ENCODE measurements at regions of chr4 and their contacts with region 1.

Region 1: DNA sequence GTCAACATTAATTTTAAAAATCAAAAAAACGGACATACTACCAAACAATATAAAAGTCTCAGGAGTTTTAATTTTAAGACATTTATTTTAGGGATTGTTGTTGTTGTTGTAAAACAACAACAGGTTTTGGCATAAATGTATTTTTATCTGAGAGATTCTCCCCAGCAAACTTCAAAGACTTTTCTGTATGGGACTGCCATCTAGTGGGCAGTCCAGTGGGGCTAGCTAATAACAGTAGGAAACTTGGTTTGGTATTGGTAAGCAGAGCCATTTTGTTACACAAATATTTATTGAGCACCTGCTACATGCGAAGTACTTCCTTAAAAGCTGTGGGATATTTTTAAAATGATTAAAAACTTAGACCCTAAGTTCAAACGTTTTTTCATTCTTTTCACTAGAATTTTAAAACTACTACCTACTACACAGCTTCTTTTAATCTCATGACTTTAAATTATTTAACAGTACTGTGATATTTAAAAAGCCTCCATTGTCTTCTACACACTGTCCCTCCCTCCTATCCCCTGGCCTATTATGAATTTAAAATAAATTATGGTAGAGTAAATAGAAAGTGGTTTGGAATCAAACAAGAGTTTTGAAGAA is 1028.4 kb upstream of the INTU start:
- DNase-seq: peak; percentile 23
- H3K4me3 Mint-ChIP-seq: no peak overlapping the region
- H3K27ac Mint-ChIP-seq: no peak overlapping the region
- H3K4me1 Mint-ChIP-seq: no peaks in the 10 kb centered on the region
- H3K27me3 Mint-ChIP-seq: no peaks in the 10 kb centered on the region
- CTCF ChIP-seq: no peak

Region 2: DNA sequence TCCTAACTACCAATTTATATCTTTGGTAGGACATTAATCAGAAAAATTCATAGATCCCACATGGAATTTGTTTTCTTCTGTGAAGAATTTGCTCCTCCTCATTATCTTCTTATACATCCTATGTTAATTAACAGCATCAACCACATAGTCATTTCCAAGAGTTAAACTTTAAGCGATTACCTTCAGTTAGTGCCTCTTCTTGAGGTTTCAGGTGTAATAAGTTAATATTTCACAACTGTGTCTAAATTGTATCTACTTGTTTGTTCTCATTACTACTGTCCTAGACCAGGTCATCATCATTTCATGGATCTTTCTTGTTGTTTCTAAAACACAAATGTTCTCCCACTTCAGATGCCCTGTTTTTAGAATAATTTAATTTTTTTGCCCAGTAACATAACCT is 831.7 kb before region 1 on chr4:
- CTCF ChIA-PET with region 1: no interaction called
- intact Hi-C with region 1: loop called (anchors 10 kb)
- DNase-seq: no peak
- H3K4me3 Mint-ChIP-seq: no peak overlapping the region
- H3K27ac Mint-ChIP-seq: no peak overlapping the region
- H3K4me1 Mint-ChIP-seq: no peaks in the 10 kb centered on the region
- H3K27me3 Mint-ChIP-seq: no peaks in the 10 kb centered on the region
- CTCF ChIP-seq: no peak

Region 3: DNA sequence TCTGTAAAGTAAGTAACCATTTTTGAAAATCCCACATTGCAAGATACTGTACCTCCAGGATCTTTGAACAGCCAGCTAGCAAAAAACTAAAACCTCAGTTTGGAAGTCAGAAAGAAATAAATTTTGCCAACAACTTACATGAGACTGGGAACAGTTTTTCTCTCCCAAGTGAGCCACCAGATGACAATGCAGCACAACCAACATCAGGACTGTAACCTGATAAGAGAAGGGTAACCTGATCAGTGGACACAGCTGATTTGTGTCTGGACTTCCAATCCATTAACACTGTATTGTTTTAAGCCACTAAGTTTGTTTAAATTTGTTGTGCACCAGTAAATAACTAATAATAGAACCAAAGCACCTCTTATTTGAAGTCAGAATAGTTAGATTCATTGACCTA is 366.4 kb before region 1 on chr4:
- CTCF ChIA-PET with region 1: no interaction called
- intact Hi-C with region 1: loop called (anchors 10 kb)
- DNase-seq: no peak
- H3K4me3 Mint-ChIP-seq: no peak overlapping the region
- H3K27ac Mint-ChIP-seq: no peak overlapping the region
- H3K4me1 Mint-ChIP-seq: no peaks in the 10 kb centered on the region
- H3K27me3 Mint-ChIP-seq: no peaks in the 10 kb centered on the region
- CTCF ChIP-seq: no peak